AG04450 (cell line): ENCODE measurements at regions of chr14 and their contacts with region 1.

Region 1: GRCh38 chr14:89564286-89564957 is 147.4 kb upstream of the FOXN3 start:
- DNase-seq: no peak
- H3K4me3 ChIP-seq: no peak overlapping the region
- H3K27ac ChIP-seq: no peak overlapping the region
- H3K27me3 ChIP-seq: no peaks in the 10 kb centered on the region
- CTCF ChIP-seq: no peak

Region 2: DNA sequence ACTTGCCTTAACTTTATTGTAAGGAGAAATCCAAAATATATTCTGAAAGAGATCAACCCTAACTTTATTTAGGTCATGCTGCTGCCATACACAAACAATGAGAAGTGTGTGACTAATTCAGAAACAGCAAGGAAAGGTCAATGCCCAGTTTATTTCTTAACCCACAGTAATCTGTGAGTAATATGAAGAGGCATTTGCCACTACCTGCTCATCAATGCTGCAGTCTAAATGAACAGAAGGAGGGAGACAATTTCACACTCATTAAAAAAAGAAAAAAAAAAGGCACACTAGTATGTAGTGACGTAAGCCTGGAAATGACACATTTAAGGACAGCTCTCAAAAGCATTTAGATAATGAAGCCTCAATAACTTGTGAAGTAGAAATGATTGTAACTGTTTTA is 56.9 kb before region 1 on chr14:
- CTCF ChIA-PET with region 1: no interaction called
- POLR2A ChIA-PET with region 1: no interaction called
- DNase-seq: no peak
- H3K4me3 ChIP-seq: no peak overlapping the region
- H3K27ac ChIP-seq: no peak overlapping the region
- H3K27me3 ChIP-seq: no peaks in the 10 kb centered on the region
- CTCF ChIP-seq: no peak

Region 3: DNA sequence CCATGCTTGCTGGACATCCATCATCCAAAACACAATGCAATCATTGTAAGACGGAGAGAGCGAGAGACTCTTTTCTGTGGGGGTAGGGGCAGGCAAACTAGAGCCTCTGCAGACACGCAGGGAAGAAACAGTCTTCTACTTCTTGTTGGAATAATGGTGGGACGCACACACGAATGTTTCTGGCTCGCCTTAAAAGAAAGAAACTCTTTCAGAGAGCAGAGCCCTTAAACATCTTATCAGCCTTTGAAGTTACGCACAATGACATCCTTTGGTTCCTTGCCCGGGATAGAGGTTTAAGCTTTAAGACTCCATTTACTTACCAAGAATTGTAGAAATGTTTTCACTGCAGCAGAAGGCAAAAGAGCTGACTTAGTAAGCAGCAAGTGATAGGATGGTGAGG is 13.6 kb before region 1 on chr14:
- CTCF ChIA-PET with region 1: interaction called, 10 read pairs
- POLR2A ChIA-PET with region 1: no interaction called
- DNase-seq: no peak
- H3K4me3 ChIP-seq: no peak overlapping the region
- H3K27ac ChIP-seq: no peak overlapping the region
- H3K27me3 ChIP-seq: no peaks in the 10 kb centered on the region
- CTCF ChIP-seq: no peak